Esophagus muscularis mucosa (tissue), 4 donors: ENCODE measurements at regions of chr2 and their contacts with region 1.

Region 1: GRCh38 chr2:32063310-32064161 is at the start of gene SPAST:
- DNase-seq: peak; percentile 98
- H3K4me3 ChIP-seq: peak within 1 kb of the TSS; percentile 76 to 94 (median 84)
- H3K27ac ChIP-seq: peak within 1 kb of the TSS; percentile 86 to 93 (median 89)
- H3K4me1 ChIP-seq: peaks cover 20 to 39% (median 32%) of the 10 kb centered on the region in 4 donors
- H3K27me3 ChIP-seq: no peaks in the 10 kb centered on the region
- CTCF ChIP-seq: peak; percentile 33 to 71 (median 50)
- EP300 ChIP-seq: no peak
- POLR2A ChIP-seq: peak; percentile 14
- total RNA-seq, gene SPAST: 13.3 to 16.6 (median 14.4) TPM

Region 2: DNA sequence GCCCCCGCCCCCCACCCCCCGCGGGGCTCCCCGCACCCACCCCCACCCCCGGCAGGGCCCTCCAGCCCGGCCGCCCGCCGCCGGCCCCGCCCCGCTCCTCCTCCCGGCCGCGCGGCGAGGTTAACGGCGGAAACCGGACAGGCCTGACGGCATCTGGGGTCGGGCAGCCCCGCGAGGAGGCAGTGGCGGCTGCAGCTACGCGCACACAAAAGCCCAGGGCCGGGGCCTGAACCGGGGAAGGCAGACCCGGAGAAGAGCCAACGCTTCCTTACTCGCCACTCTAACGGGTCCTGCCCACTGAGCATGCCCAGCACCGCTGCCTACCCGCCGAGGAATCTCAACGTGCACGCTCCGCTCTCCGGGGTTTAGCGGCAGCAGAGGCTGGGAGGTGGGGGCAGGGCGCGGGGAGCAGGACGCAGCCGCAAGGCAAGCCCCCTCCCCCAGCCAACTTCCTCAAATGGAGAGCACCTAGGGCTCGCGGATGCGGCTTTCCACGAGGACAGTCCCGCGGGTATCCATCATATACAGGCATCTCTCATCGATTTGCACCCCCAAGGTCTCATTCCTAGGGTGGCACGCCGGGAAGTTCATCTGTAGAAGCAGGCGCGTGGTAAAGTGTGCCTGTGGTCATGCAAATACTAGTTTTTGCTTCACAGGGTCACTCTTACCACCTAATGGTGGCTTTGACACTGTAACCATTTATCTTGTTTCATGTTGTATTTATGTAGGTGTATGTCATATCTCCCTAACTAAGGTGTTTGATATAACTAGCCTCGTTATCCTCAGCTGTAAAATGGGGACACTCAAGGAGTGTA is 52.7 kb before region 1 on chr2 and contains the start of gene MEMO1:
- intact Hi-C with region 1: loop called (anchors 1 kb)
- DNase-seq: peak; percentile 97
- H3K4me3 ChIP-seq: peak within 1 kb of the TSS; percentile 73 to 97 (median 85)
- H3K27ac ChIP-seq: peak within 1 kb of the TSS; percentile 89 to 96 (median 94)
- H3K4me1 ChIP-seq: peaks cover 21 to 41% (median 31%) of the 10 kb centered on the region in 4 donors
- H3K27me3 ChIP-seq: no peaks in the 10 kb centered on the region
- CTCF ChIP-seq: no peak
- EP300 ChIP-seq: no peak
- POLR2A ChIP-seq: peak; percentile 69
- total RNA-seq, gene MEMO1: 25.0 to 40.7 (median 33.2) TPM

Region 3: GRCh38 chr2:32039447-32040219 is 23.9 kb before region 1 on chr2 and contains the start of gene DPY30:
- intact Hi-C with region 1: loop called (anchors 2 kb)
- DNase-seq: peak; percentile 96
- H3K4me3 ChIP-seq: peak within 1 kb of the TSS; percentile 68 to 99 (median 90)
- H3K27ac ChIP-seq: peak within 1 kb of the TSS; percentile 77 to 87 (median 84)
- H3K4me1 ChIP-seq: peaks cover 15 to 20% (median 16%) of the 10 kb centered on the region in 4 donors
- H3K27me3 ChIP-seq: no peaks in the 10 kb centered on the region
- CTCF ChIP-seq: peak in 1 of 3 experiments; percentile 14
- EP300 ChIP-seq: no peak
- POLR2A ChIP-seq: no peak
- total RNA-seq, gene DPY30: 52.6 to 83.1 (median 61.1) TPM

Region 4: GRCh38 chr2:32095671-32096070 is 32.1 kb after region 1 on chr2:
- intact Hi-C with region 1: no loop called
- DNase-seq: no peak
- H3K4me3 ChIP-seq: no peak overlapping the region
- H3K27ac ChIP-seq: no peak overlapping the region
- H3K4me1 ChIP-seq: no peaks in the 10 kb centered on the region
- H3K27me3 ChIP-seq: no peaks in the 10 kb centered on the region
- CTCF ChIP-seq: no peak
- EP300 ChIP-seq: no peak
- POLR2A ChIP-seq: no peak

Region 5: GRCh38 chr2:32168513-32168912 is 105.0 kb after region 1 on chr2:
- intact Hi-C with region 1: loop called (anchors 5 kb)
- DNase-seq: no peak
- H3K4me3 ChIP-seq: no peak overlapping the region
- H3K27ac ChIP-seq: no peak overlapping the region
- H3K4me1 ChIP-seq: peaks cover 15 to 28% (median 24%) of the 10 kb centered on the region in 4 donors
- H3K27me3 ChIP-seq: no peaks in the 10 kb centered on the region
- CTCF ChIP-seq: no peak
- EP300 ChIP-seq: no peak
- POLR2A ChIP-seq: no peak